ENCODE measurements at regions of chr1 and their contacts with region 1.

Region 1: GRCh38 chr1:211514030-211514754 is 22.2 kb upstream of the RD3 start:
- DNase-seq: peak; percentile 62
- H3K4me3 ChIP-seq: no peak overlapping the region
- H3K27ac ChIP-seq: no peak overlapping the region
- H3K27me3 ChIP-seq: no peaks in the 10 kb centered on the region
- CTCF ChIP-seq: peak; percentile 81

Region 2: DNA sequence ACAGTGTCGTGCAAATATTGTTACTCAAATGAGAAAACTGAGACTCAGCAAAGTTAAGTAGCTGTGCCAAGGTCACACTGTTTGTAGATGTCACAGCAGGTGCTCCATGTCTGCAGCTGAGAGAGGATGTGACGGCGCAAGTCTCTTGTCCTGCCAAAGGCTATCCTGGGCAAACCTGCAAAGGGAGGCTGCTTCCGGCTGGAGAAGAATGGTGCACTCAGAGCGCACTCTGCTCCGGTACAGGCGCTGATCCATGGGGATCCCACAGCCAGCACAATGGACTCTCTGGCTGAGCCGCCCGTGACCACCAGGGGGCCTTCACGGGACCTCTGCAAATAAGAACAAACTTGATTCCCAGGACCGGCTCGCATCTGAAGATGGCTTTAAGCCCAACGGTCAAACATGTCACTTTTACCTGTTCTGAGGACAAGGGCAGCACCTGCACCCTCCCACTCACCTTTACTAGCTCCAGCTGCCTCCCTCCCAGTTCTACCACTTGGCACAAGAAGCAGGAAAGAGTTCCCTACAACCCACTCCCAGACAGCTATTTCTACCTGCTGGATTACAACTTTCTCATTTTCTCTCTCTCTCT is 44.2 kb before region 1 on chr1:
- CTCF ChIA-PET with region 1: interaction called, 92 read pairs
- POLR2A ChIA-PET with region 1: no interaction called
- DNase-seq: peak; percentile 21
- H3K4me3 ChIP-seq: no peak overlapping the region
- H3K27ac ChIP-seq: no peak overlapping the region
- H3K27me3 ChIP-seq: peaks cover 24% of the 10 kb centered on the region
- CTCF ChIP-seq: peak; percentile 93

Region 3: GRCh38 chr1:211501711-211502400 is 12.3 kb before region 1 on chr1:
- CTCF ChIA-PET with region 1: interaction called, 30 read pairs
- POLR2A ChIA-PET with region 1: no interaction called
- DNase-seq: peak; percentile 29
- H3K4me3 ChIP-seq: no peak overlapping the region
- H3K27ac ChIP-seq: no peak overlapping the region
- H3K27me3 ChIP-seq: peaks cover 47% of the 10 kb centered on the region
- CTCF ChIP-seq: no peak

Region 4: DNA sequence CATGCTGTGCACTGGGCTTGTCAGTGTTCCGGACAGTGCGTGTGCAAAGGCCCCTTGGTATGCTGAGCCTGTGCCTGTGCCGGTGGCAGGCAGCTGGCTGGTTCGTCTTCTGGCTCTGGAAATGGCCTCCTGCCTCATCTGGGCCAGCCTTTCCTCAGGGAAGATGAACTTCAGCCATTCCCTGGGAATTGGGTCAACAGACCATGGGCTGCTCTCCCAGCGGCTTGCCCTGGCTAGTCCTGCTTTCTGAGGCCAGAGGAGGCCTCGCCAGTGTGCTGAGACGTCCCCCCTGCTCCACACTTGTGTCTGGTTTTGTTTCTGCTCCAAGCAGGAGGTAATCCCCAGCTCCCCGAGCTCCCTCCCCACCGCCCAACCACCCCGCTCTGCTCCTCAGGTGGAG is 10.3 kb after region 1 on chr1:
- CTCF ChIA-PET with region 1: interaction called, 14 read pairs
- POLR2A ChIA-PET with region 1: no interaction called
- DNase-seq: no peak
- H3K4me3 ChIP-seq: no peak overlapping the region
- H3K27ac ChIP-seq: no peak overlapping the region
- H3K27me3 ChIP-seq: peaks cover 6% of the 10 kb centered on the region
- CTCF ChIP-seq: no peak

Region 5: DNA sequence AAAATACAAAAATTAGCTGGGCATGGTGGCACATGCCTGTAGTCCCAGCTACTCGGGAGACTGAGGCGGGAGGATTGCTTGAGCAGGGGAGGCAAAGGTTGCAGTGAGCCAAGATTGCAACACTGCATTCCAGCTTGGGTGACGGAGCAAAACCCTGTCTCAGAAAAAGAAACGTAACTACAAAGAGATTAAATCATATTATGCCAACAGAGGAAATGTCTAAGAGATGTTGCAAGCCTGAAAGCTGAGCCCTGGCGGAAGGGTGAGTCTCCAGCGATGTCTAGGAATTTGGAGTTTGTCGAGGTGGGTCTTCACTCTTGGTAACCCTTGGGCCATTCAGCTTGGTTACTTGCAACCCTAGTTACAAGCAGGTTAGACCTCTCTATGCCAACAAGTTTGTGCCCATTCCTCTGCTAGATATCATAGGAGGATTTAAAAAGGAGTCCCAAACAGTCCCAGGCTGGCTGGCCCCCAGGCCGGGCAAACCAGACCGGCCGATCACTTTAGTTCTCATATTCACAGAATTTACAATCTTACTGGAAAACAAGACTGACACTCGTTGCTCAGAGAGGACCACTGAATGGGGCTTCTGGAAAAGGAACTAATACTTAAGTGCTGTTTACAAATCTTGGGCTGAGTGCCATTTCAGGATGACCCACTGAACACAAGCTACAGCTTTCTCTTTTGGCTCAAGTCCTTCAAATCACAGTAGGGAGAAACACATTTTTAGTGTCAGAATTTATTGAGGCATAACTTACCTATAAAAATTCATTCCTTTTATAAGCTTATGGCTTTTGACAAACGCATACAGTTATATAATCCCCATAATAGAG is 37.7 kb after region 1 on chr1:
- CTCF ChIA-PET with region 1: interaction called, 13 read pairs
- POLR2A ChIA-PET with region 1: no interaction called
- DNase-seq: peak; percentile 20
- H3K4me3 ChIP-seq: peak overlapping the region; percentile 8; the same call in 1 of the 2 replicates
- H3K27ac ChIP-seq: peak overlapping the region; percentile 60
- H3K27me3 ChIP-seq: no peaks in the 10 kb centered on the region
- CTCF ChIP-seq: no peak

Region 6: DNA sequence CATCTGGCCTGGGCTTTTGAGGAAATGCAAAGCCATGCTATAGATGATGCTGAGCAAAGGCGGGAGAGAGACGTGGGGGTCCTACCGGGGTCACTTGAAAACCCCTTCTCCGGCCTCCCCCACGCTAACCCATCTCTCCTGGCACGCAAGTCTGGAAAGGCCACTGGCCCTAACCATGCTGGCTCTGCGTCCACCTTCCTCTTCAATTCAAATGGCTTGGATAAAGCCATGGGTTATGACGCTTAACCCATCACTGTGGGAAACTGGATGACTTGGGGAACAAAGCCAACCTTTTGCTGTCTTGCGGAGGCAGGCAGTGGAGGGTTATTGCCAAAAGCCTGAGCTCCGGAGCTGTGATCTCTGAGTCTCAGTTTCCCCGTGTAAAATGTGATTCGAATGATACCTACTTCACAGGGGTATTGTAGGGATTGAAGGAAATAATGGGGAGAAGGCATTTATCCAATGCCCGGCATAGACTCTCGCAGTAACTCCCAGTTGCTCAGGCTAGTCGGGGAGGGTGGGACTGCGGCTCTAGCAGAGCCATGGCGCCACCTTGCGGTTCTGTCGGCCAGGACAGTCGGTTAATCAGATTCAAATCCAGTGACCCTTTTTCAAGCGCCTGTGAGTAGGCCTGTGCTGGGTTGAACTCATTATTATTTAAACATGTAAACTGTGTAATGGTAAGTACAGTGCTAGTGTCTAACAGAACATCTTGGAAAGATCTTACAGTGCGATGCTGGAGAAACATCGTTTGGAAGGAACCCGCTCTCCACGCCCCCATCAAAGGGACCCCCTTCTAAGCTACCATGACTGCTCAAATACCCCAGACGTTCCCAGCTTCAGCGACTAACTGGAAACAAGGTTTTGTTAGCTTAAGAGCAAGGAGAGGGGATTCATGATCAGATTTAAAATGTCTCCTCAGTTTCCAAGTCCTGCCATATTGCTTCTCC is 140.9 kb after region 1 on chr1:
- CTCF ChIA-PET with region 1: interaction called, 87 read pairs
- POLR2A ChIA-PET with region 1: no interaction called
- DNase-seq: peak; percentile 74
- H3K4me3 ChIP-seq: no peak overlapping the region
- H3K27ac ChIP-seq: peak overlapping the region; percentile 11
- H3K27me3 ChIP-seq: no peaks in the 10 kb centered on the region
- CTCF ChIP-seq: peak; percentile 95

Region 7: GRCh38 chr1:211660718-211661222 is 146.6 kb after region 1 on chr1:
- CTCF ChIA-PET with region 1: interaction called, 87 read pairs
- POLR2A ChIA-PET with region 1: no interaction called
- DNase-seq: no peak
- H3K4me3 ChIP-seq: no peak overlapping the region
- H3K27ac ChIP-seq: no peak overlapping the region
- H3K27me3 ChIP-seq: no peaks in the 10 kb centered on the region
- CTCF ChIP-seq: no peak